MCF 10A (cell line): ENCODE measurements at regions of chr16 and their contacts with region 1.

Region 1: DNA sequence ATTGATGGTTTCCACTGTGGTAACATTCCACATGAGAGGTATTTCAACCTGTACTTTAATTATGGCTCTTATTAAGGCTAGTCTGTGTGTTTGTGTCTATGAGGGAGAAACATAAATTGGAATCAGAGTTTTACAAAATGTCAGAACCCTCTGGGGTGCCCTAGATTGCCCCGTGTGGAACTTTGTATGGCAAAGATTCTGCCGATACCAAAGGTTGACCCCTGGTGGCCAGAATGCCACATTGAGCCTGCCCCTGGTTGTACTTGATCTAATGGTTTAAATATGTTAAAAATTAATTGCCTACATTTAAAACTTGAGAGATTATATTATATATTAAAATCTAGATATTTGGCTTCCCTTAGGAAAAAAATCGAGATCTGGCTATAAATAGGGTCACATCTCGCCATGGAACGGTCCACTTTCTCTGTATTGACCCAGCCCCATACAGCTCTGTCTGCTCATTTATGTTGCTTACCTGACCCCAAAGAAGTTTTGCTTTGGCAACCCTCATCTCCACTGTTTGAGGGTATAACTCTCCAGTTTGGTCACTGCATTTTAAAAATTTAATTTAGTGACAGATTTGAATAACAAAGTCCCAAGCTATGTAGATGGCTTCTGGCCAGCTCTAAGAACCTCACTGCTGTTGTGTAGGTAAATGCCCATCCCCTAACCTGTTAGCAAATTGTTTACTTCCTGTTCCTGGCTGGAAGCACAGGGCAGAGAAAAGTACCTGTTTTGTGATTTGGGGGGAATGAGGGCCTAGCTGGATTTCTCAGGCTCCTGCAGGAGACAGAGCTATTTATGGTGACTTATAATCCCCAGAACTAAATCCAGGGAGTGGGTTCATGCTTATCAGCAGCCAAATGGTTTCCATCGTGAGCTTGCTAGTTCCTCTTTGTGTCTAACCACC is 95.0 kb downstream of the PLCG2 start:
- DNase-seq: peak; percentile 58
- H3K4me3 Mint-ChIP-seq: no peak overlapping the region
- H3K27ac Mint-ChIP-seq: no peak overlapping the region
- H3K4me1 Mint-ChIP-seq: no peaks in the 10 kb centered on the region
- H3K27me3 Mint-ChIP-seq: no peaks in the 10 kb centered on the region
- CTCF ChIP-seq: peak; percentile 79

Region 2: DNA sequence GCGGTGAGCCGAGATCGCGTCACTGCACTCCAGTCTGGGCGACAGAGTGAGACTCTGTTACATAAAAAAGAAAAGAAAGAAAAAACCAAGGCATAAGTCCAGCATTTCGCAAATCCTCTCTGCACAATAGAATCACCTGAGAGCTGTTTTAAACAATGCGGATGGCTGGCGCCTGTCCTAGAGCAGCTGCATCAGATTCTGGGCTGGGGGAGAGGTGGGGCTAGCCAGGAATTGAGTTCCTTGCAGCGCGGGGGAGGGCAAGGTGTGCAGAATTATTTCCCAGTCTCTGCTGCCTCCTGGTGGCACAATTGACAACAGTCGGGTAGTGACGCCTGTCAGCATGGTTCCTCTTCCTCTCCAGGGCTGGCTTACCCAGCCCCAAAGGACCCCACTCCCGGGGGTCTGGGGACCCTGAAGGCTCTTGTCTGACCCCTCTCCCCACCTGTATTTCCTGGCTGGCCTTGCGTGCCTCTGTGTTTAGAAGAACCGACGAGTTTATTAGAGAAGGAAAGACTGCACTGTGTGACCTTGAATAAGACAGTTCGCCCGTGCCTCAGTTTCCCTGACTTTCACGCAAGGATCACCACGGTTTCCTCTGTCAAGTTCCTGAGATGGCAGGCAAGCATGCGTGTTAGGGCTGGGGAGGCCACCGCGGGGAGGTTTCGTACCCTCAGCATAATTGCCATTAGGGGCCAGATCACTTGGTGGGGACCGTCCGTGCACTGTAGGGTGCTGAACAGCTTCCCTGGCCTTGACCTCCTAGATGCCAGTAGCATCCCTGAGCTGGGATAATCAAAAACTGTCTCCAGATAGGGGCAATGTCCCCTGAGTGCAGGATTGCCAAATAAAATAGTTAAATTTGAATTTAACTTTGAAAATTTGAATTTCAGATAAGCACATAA is 136.0 kb before region 1 on chr16:
- CTCF ChIA-PET with region 1: interaction called, 6 read pairs
- POLR2A ChIA-PET with region 1: interaction called, 3 read pairs
- intact Hi-C with region 1: loop called (anchors 1 kb)
- DNase-seq: peak; percentile 96
- H3K4me3 Mint-ChIP-seq: peak overlapping the region; percentile 52
- H3K27ac Mint-ChIP-seq: peak overlapping the region; percentile 51
- H3K4me1 Mint-ChIP-seq: no peaks in the 10 kb centered on the region
- H3K27me3 Mint-ChIP-seq: no peaks in the 10 kb centered on the region
- CTCF ChIP-seq: peak; percentile 86

Region 3: DNA sequence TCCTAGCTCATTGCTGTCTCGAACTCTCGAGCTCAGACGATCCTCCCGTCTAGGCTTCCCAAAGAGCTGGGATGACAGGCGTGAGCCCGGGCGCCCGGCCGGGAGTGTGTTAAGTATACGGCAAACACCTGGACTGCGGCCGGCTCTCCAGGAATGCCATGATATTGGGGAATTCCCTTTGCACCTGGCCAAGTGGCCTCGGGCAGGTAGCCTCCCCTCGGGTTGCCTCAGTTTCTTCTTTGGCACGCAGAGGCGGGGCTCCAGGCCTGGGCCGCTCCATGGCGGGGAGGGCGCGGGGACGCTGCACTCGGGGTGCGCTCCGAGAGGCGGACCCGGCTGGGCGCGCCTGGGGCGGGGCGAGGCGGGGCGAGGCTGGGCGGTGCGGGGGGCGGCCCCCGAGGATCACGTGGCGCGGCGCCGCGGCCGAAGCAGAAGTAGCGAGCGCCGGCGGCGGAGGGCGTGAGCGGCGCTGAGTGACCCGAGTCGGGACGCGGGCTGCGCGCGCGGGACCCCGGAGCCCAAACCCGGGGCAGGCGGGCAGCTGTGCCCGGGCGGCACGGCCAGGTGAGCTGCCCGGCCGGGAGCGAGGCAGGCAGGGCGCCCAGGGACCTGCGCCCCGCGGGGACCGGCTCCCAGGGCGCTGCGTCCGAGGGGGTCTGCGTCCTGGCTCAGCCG is 95.1 kb before region 1 on chr16 and contains the start of gene PLCG2:
- CTCF ChIA-PET with region 1: interaction called, 15 read pairs
- POLR2A ChIA-PET with region 1: no interaction called
- intact Hi-C with region 1: loop called (anchors 1 kb)
- DNase-seq: peak; percentile 71
- H3K4me3 Mint-ChIP-seq: peak within 1 kb of the TSS; percentile 81
- H3K27ac Mint-ChIP-seq: no peak within 1 kb of the TSS
- H3K4me1 Mint-ChIP-seq: peaks cover 9% of the 10 kb centered on the region
- H3K27me3 Mint-ChIP-seq: peaks cover 23% of the 10 kb centered on the region
- CTCF ChIP-seq: no peak
- total RNA-seq, gene PLCG2: 5.2 and 6.0 TPM in 2 replicates

Region 4: GRCh38 chr16:81790830-81791435 is 83.2 kb before region 1 on chr16:
- CTCF ChIA-PET with region 1: interaction called, 13 read pairs
- POLR2A ChIA-PET with region 1: no interaction called
- intact Hi-C with region 1: no loop called
- DNase-seq: no peak
- H3K4me3 Mint-ChIP-seq: no peak overlapping the region
- H3K27ac Mint-ChIP-seq: no peak overlapping the region
- H3K4me1 Mint-ChIP-seq: no peaks in the 10 kb centered on the region
- H3K27me3 Mint-ChIP-seq: no peaks in the 10 kb centered on the region
- CTCF ChIP-seq: no peak

Region 5: DNA sequence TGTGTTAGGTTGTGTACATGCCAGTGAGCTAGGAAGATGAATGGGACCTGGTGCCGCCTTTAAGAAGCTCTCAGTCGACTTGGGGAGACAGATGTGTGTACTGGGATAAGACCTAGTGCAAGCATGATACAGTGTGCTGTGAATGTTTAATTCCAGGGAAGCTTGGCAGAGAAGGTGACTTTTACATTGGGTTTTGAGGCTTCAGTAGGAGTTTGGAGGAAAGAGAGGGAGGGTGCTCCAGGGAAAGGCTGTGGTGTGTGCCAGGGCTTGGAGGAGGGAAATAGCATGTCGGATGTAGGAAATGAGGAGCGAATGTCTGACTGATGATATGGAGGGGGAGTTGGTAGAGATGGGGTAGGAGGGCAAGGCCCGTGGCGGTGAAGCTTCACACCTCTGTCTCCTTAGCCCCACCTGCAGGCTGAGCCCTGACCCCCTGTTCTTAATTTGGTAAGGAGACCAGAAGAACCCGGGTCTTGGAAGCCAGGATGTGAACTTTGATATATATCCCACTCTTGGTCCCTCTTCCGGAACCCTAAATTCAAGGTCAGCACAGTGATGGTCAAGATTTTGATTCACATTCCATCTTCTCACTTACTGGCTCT is 18.4 kb before region 1 on chr16:
- CTCF ChIA-PET with region 1: interaction called, 39 read pairs
- POLR2A ChIA-PET with region 1: no interaction called
- intact Hi-C with region 1: no loop called
- DNase-seq: no peak
- H3K4me3 Mint-ChIP-seq: no peak overlapping the region
- H3K27ac Mint-ChIP-seq: no peak overlapping the region
- H3K4me1 Mint-ChIP-seq: no peaks in the 10 kb centered on the region
- H3K27me3 Mint-ChIP-seq: no peaks in the 10 kb centered on the region
- CTCF ChIP-seq: no peak

Region 6: GRCh38 chr16:81863630-81864352 is 10.3 kb before region 1 on chr16:
- CTCF ChIA-PET with region 1: interaction called, 39 read pairs
- POLR2A ChIA-PET with region 1: no interaction called
- intact Hi-C with region 1: no loop called
- DNase-seq: no peak
- H3K4me3 Mint-ChIP-seq: no peak overlapping the region
- H3K27ac Mint-ChIP-seq: no peak overlapping the region
- H3K4me1 Mint-ChIP-seq: peaks cover 9% of the 10 kb centered on the region
- H3K27me3 Mint-ChIP-seq: no peaks in the 10 kb centered on the region
- CTCF ChIP-seq: no peak

Region 7: GRCh38 chr16:81885976-81886586 is 12.0 kb after region 1 on chr16:
- CTCF ChIA-PET with region 1: interaction called, 58 read pairs
- POLR2A ChIA-PET with region 1: interaction called, 3 read pairs
- intact Hi-C with region 1: no loop called
- DNase-seq: peak; percentile 54
- H3K4me3 Mint-ChIP-seq: no peak overlapping the region
- H3K27ac Mint-ChIP-seq: no peak overlapping the region
- H3K4me1 Mint-ChIP-seq: peaks cover 13% of the 10 kb centered on the region
- H3K27me3 Mint-ChIP-seq: no peaks in the 10 kb centered on the region
- CTCF ChIP-seq: peak; percentile 47

Region 8: GRCh38 chr16:81917375-81917774 is 43.3 kb after region 1 on chr16:
- CTCF ChIA-PET with region 1: no interaction called
- POLR2A ChIA-PET with region 1: no interaction called
- intact Hi-C with region 1: no loop called
- DNase-seq: no peak
- H3K4me3 Mint-ChIP-seq: no peak overlapping the region
- H3K27ac Mint-ChIP-seq: no peak overlapping the region
- H3K4me1 Mint-ChIP-seq: no peaks in the 10 kb centered on the region
- H3K27me3 Mint-ChIP-seq: no peaks in the 10 kb centered on the region
- CTCF ChIP-seq: no peak

Region 9: GRCh38 chr16:81940781-81941560 is 66.9 kb after region 1 on chr16:
- CTCF ChIA-PET with region 1: no interaction called
- POLR2A ChIA-PET with region 1: no interaction called
- intact Hi-C with region 1: no loop called
- DNase-seq: peak; percentile 66
- H3K4me3 Mint-ChIP-seq: no peak overlapping the region
- H3K27ac Mint-ChIP-seq: no peak overlapping the region
- H3K4me1 Mint-ChIP-seq: peaks cover 7% of the 10 kb centered on the region
- H3K27me3 Mint-ChIP-seq: no peaks in the 10 kb centered on the region
- CTCF ChIP-seq: peak; percentile 62